ENCODE measurements at regions of chr15 and their contacts with region 1.

Region 1: GRCh38 chr15:42267286-42267685 is 5.7 kb upstream of the GANC start:
- DNase-seq: no peak
- H3K4me3 ChIP-seq: no peak overlapping the region
- H3K27ac ChIP-seq: no peak overlapping the region
- H3K4me1 ChIP-seq: peaks cover 29 to 44% (median 38%) of the 10 kb centered on the region in 4 donors
- H3K27me3 ChIP-seq: no peaks in the 10 kb centered on the region
- CTCF ChIP-seq: no peak
- EP300 ChIP-seq: no peak
- POLR2A ChIP-seq: no peak

Region 2: GRCh38 chr15:42184296-42184695 is 83.0 kb before region 1 on chr15:
- intact Hi-C with region 1: no loop called
- DNase-seq: no peak
- H3K4me3 ChIP-seq: no peak overlapping the region
- H3K27ac ChIP-seq: no peak overlapping the region
- H3K4me1 ChIP-seq: no peaks in the 10 kb centered on the region
- H3K27me3 ChIP-seq: no peaks in the 10 kb centered on the region
- CTCF ChIP-seq: no peak
- EP300 ChIP-seq: no peak
- POLR2A ChIP-seq: no peak

Region 3: GRCh38 chr15:42215913-42216829 is 51.1 kb before region 1 on chr15:
- intact Hi-C with region 1: loop called (anchors 10 kb)
- DNase-seq: no peak
- H3K4me3 ChIP-seq: no peak overlapping the region
- H3K27ac ChIP-seq: no peak overlapping the region
- H3K4me1 ChIP-seq: no peaks in the 10 kb centered on the region
- H3K27me3 ChIP-seq: no peaks in the 10 kb centered on the region
- CTCF ChIP-seq: no peak
- EP300 ChIP-seq: no peak
- POLR2A ChIP-seq: no peak

Measured in esophagus muscularis mucosa (tissue), 4 donors.